PC-3 (cell line): ENCODE measurements at regions of chr4 and their contacts with region 1.

Region 1: DNA sequence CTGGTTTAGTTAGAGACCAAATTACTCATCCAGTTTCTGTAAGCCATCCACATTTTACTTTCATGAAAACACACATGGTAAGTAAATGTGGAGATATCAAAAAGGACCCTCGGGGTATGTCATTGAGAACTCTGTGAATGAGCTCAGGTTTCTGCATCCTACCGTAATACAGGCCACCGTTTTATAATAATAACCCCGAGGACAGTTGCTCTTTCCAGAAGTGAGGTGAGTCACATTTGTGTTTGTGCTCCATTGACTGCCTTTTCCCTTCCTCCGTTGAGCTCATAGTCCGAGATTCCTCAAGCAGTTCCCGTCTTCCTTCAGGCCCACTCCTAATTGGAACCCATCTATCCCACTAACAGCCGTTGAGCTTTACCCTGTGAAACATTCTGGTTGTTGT is 95.3 kb downstream of the GRID2 start:
- DNase-seq: peak; percentile 44
- ATAC-seq: no peak
- H3K4me3 ChIP-seq: peak overlapping the region; percentile 23; the same call in 1 of the 2 replicates
- H3K27ac ChIP-seq: no peak overlapping the region
- H3K4me1 ChIP-seq: peaks cover 20% of the 10 kb centered on the region
- H3K27me3 ChIP-seq: no peaks in the 10 kb centered on the region
- CTCF ChIP-seq: no peak

Region 2: GRCh38 chr4:92789741-92790140 is 390.7 kb after region 1 on chr4:
- CTCF ChIA-PET with region 1: no interaction called
- POLR2A ChIA-PET with region 1: no interaction called
- intact Hi-C with region 1: loop called (anchors 10 kb)
- DNase-seq: no peak
- ATAC-seq: no peak
- H3K4me3 ChIP-seq: no peak overlapping the region
- H3K27ac ChIP-seq: no peak overlapping the region
- H3K4me1 ChIP-seq: no peaks in the 10 kb centered on the region
- H3K27me3 ChIP-seq: no peaks in the 10 kb centered on the region
- CTCF ChIP-seq: no peak